Caki2 (cell line): ENCODE measurements at regions of chr14 and their contacts with region 1.

Region 1: DNA sequence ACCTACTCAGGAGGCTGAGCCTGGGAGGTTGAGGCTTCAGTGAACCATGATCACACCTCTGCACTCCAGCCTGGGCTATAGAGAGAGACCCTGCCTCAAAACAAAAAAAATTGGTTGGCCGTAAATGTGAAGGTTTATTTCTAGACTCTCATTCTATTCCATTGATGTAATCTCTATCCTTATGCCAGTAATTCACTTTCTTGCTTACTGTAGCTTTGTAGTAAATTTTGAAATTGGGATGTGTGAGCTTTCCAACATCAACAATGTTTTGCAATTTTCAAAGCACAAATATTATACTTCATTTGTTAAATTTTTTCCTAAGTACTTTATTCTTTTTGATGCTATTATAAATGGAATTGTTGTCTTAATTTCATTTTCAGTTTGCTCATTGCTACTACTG is 24.6 kb downstream of the LIN52 start:
- DNase-seq: no peak

Region 2: DNA sequence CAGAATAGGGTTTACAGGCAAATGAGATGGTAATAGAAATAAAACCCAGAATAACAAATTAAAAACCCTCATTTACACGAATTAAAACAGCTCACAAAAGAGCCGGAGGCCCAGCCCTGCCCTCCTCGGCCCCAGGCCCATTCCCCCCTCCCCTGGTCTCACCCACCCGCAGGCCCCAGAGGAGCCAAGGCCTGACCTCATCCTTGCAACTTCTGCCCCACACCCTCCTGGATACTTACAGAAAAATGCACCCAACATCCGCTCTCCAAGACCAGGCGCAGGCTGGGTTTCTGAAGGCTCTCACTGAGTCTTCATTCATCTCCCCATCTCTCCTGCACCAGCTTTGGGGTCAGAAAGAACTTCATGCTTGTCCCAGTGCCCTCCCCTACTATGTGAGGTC is 113.6 kb after region 1 on chr14:
- in situ Hi-C with region 1: loop called (anchors 10 kb)
- DNase-seq: no peak